MCF 10A (cell line): ENCODE measurements at regions of chr6 and their contacts with region 1.

Region 1: GRCh38 chr6:14210663-14211561 is 93.3 kb downstream of the CD83 start:
- DNase-seq: peak; percentile 85
- H3K4me3 Mint-ChIP-seq: peak overlapping the region; percentile 72
- H3K27ac Mint-ChIP-seq: no peak overlapping the region
- H3K4me1 Mint-ChIP-seq: peaks cover 13% of the 10 kb centered on the region
- H3K27me3 Mint-ChIP-seq: no peaks in the 10 kb centered on the region
- CTCF ChIP-seq: peak; percentile 76

Region 2: DNA sequence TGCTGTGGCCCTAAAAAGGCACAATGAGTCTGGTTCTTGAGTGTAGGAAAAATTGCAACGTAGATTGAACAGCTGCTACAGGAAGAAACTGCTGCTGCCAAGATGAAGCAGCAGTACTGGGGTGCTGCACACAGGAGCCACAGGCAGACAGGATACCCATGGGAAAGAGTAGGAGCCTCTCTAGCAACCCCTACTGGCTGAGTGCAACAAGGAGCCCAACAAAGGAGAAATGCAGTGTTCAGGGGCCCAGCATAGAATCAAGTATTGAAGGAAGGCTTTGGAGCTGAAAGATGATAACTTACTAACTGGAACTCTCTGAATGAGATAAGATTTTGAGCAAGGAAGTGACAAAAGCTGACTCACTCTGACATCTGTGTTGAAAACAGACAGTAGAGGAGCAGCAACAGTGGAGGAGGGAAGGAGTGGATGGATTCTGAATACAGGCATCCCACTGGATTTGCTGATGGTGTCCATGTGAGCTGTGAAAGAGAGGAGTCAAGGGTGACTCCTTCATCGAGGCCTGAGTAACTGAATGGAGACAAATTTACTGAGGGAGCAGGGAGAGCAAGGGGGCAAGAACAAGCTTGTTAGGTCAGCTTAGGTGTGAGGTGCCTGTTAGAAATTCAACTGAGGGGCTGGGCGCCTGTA is 500.3 kb after region 1 on chr6:
- CTCF ChIA-PET with region 1: no interaction called
- POLR2A ChIA-PET with region 1: no interaction called
- intact Hi-C with region 1: loop called (anchors 5 kb)
- DNase-seq: peak; percentile 83
- H3K4me3 Mint-ChIP-seq: peak overlapping the region; percentile 11
- H3K27ac Mint-ChIP-seq: peak overlapping the region; percentile 68
- H3K4me1 Mint-ChIP-seq: peaks cover 48% of the 10 kb centered on the region
- H3K27me3 Mint-ChIP-seq: no peaks in the 10 kb centered on the region
- CTCF ChIP-seq: peak; percentile 43

Region 3: GRCh38 chr6:14734416-14735340 is 523.8 kb after region 1 on chr6:
- CTCF ChIA-PET with region 1: interaction called, 3 read pairs
- POLR2A ChIA-PET with region 1: no interaction called
- intact Hi-C with region 1: loop called (anchors 5 kb)
- DNase-seq: peak; percentile 79
- H3K4me3 Mint-ChIP-seq: no peak overlapping the region
- H3K27ac Mint-ChIP-seq: peak overlapping the region; percentile 85
- H3K4me1 Mint-ChIP-seq: peaks cover 45% of the 10 kb centered on the region
- H3K27me3 Mint-ChIP-seq: no peaks in the 10 kb centered on the region
- CTCF ChIP-seq: no peak

Region 4: GRCh38 chr6:15441215-15441868 is 1230.4 kb after region 1 on chr6:
- CTCF ChIA-PET with region 1: interaction called, 6 read pairs
- POLR2A ChIA-PET with region 1: no interaction called
- intact Hi-C with region 1: loop called (anchors 1 kb)
- DNase-seq: peak; percentile 82
- H3K4me3 Mint-ChIP-seq: no peak overlapping the region
- H3K27ac Mint-ChIP-seq: no peak overlapping the region
- H3K4me1 Mint-ChIP-seq: peaks cover 31% of the 10 kb centered on the region
- H3K27me3 Mint-ChIP-seq: no peaks in the 10 kb centered on the region
- CTCF ChIP-seq: peak; percentile 75

Region 5: GRCh38 chr6:15491255-15491985 is 1280.5 kb after region 1 on chr6:
- CTCF ChIA-PET with region 1: interaction called, 3 read pairs
- POLR2A ChIA-PET with region 1: no interaction called
- intact Hi-C with region 1: loop called (anchors 10 kb)
- DNase-seq: peak; percentile 68
- H3K4me3 Mint-ChIP-seq: no peak overlapping the region
- H3K27ac Mint-ChIP-seq: no peak overlapping the region
- H3K4me1 Mint-ChIP-seq: peaks cover 12% of the 10 kb centered on the region
- H3K27me3 Mint-ChIP-seq: no peaks in the 10 kb centered on the region
- CTCF ChIP-seq: peak; percentile 80

Region 6: DNA sequence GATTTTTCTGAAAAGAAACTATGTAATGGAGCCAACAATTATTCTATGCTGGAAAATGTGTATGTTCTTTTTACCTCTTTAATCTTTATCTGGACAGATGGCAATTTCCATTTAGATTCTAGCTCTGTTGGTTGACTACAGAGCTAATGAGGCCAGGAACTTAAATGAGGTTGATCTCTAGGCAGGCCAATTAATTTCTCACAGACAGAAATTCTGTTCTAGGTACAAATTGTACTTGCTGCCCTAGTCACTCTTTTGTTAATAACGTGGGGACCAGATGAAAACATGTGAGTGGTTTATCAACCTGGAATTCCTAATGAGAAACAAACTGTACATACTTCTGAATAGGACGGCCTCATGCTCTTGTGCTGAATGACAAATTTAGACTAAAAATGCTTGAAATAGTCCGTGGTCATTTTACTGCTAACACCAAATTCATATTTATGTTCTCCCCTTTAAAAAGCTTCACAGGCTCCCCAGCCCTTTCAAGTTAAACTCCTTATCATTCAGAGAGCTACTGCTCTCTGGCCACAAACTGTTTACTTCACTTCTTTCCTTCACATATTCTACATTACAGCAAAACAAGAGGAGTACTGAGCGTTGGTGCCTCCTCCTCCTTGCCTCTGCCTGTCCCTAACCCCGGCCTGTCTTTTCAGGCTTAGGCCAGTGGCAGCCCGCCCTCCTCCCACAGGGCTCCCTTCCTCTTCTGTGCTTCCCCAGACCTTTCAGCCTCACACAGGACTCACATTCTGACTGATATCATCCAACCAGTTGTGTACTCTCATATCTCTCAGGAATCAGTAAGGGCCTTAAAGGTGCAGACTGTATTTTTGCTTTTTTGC is 1410.5 kb after region 1 on chr6:
- CTCF ChIA-PET with region 1: interaction called, 3 read pairs
- POLR2A ChIA-PET with region 1: interaction called, 4 read pairs
- intact Hi-C with region 1: loop called (anchors 2 kb)
- DNase-seq: peak; percentile 21
- H3K4me3 Mint-ChIP-seq: no peak overlapping the region
- H3K27ac Mint-ChIP-seq: peak overlapping the region; percentile 85
- H3K4me1 Mint-ChIP-seq: peaks cover 12% of the 10 kb centered on the region
- H3K27me3 Mint-ChIP-seq: no peaks in the 10 kb centered on the region
- CTCF ChIP-seq: no peak